ENCODE measurements at regions of chr10 and their contacts with region 1.

Region 1: GRCh38 chr10:115795964-115796363 is 477.0 kb downstream of the GFRA1 start:
- DNase-seq: no peak
- ATAC-seq: no peak
- H3K4me3 ChIP-seq: no peak overlapping the region
- H3K27ac ChIP-seq: no peak overlapping the region
- H3K4me1 ChIP-seq: no peaks in the 10 kb centered on the region
- H3K27me3 ChIP-seq: peaks cover 0 to 2% (median 0%) of the 10 kb centered on the region in 9 donors
- CTCF ChIP-seq: no peak
- POLR2A ChIP-seq: no peak

Region 2: GRCh38 chr10:114607358-114607998 is 1188.5 kb before region 1 on chr10:
- intact Hi-C with region 1: no loop called
- DNase-seq: no peak
- ATAC-seq: peak in 2 of 4 donors; percentile 17 to 41
- H3K4me3 ChIP-seq: no peak overlapping the region
- H3K27ac ChIP-seq: peak overlapping the region; percentile 39 to 85 (median 71)
- H3K4me1 ChIP-seq: peaks cover 9 to 100% (median 84%) of the 10 kb centered on the region in 12 donors
- H3K27me3 ChIP-seq: no peaks in the 10 kb centered on the region
- CTCF ChIP-seq: no peak
- POLR2A ChIP-seq: no peak

Region 3: GRCh38 chr10:115918812-115919211 is 122.8 kb after region 1 on chr10:
- intact Hi-C with region 1: no loop called
- DNase-seq: no peak
- ATAC-seq: no peak
- H3K4me3 ChIP-seq: no peak overlapping the region
- H3K27ac ChIP-seq: no peak overlapping the region
- H3K4me1 ChIP-seq: no peaks in the 10 kb centered on the region
- H3K27me3 ChIP-seq: no peaks in the 10 kb centered on the region
- CTCF ChIP-seq: no peak
- POLR2A ChIP-seq: no peak

Region 4: DNA sequence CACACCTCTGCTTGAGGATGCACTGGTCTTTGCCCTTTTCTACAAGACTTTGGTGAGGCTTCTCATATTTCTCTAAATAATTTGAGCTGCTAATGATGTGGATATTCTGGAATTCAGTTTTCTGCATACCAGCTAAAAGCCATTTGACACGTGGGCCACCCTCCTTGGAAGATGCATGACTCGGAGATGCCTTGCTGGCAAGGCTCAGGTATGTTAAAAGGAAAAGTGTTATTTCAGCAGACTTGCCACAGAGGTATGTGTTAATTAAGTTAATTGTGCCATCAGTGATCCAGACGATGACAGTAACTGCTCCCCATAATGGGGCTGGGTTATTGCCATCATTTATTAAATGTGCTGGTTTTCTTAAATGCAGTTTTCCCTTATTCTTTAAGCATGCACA is 485.8 kb after region 1 on chr10:
- intact Hi-C with region 1: loop called in 7 of 10 experiments (anchors 2 to 10 kb)
- DNase-seq: no peak
- ATAC-seq: no peak
- H3K4me3 ChIP-seq: no peak overlapping the region
- H3K27ac ChIP-seq: no peak overlapping the region
- H3K4me1 ChIP-seq: no peaks in the 10 kb centered on the region
- H3K27me3 ChIP-seq: peaks cover 0 to 22% (median 0%) of the 10 kb centered on the region in 9 donors
- CTCF ChIP-seq: no peak
- POLR2A ChIP-seq: no peak

Measured in heart left ventricle (tissue), 16 donors.